ENCODE measurements at regions of chr11 and their contacts with region 1.

Region 1: GRCh38 chr11:62591448-62592145 is at the start of gene TUT1:
- DNase-seq: peak; percentile 99
- ATAC-seq: peak; percentile 88
- H3K4me3 Mint-ChIP-seq: peak within 1 kb of the TSS; percentile 91
- H3K27ac Mint-ChIP-seq: peak within 1 kb of the TSS; percentile 93
- H3K4me1 Mint-ChIP-seq: peaks cover 55% of the 10 kb centered on the region
- H3K27me3 Mint-ChIP-seq: no peaks in the 10 kb centered on the region
- total RNA-seq, gene TUT1: 22.2 to 25.0 TPM

Region 2: GRCh38 chr11:62394825-62395538 is 196.6 kb before region 1 on chr11:
- CTCF ChIA-PET with region 1: interaction called, 15 read pairs
- POLR2A ChIA-PET with region 1: no interaction called
- DNase-seq: peak; percentile 73
- ATAC-seq: peak; percentile 82
- H3K4me3 Mint-ChIP-seq: no peak overlapping the region
- H3K27ac Mint-ChIP-seq: no peak overlapping the region
- H3K4me1 Mint-ChIP-seq: peaks cover 33% of the 10 kb centered on the region
- H3K27me3 Mint-ChIP-seq: no peaks in the 10 kb centered on the region

Region 3: GRCh38 chr11:62487738-62488551 is 103.7 kb before region 1 on chr11:
- CTCF ChIA-PET with region 1: no interaction called
- POLR2A ChIA-PET with region 1: no interaction called
- DNase-seq: no peak
- ATAC-seq: no peak
- H3K4me3 Mint-ChIP-seq: no peak overlapping the region
- H3K27ac Mint-ChIP-seq: no peak overlapping the region
- H3K4me1 Mint-ChIP-seq: no peaks in the 10 kb centered on the region
- H3K27me3 Mint-ChIP-seq: no peaks in the 10 kb centered on the region

Region 4: GRCh38 chr11:62556108-62556871 is 35.3 kb before region 1 on chr11:
- CTCF ChIA-PET with region 1: interaction called, 16 read pairs
- POLR2A ChIA-PET with region 1: interaction called, 15 read pairs
- DNase-seq: peak; percentile 94
- ATAC-seq: peak; percentile 72
- H3K4me3 Mint-ChIP-seq: peak overlapping the region; percentile 66
- H3K27ac Mint-ChIP-seq: peak overlapping the region; percentile 95
- H3K4me1 Mint-ChIP-seq: peaks cover 95% of the 10 kb centered on the region
- H3K27me3 Mint-ChIP-seq: no peaks in the 10 kb centered on the region

Region 5: DNA sequence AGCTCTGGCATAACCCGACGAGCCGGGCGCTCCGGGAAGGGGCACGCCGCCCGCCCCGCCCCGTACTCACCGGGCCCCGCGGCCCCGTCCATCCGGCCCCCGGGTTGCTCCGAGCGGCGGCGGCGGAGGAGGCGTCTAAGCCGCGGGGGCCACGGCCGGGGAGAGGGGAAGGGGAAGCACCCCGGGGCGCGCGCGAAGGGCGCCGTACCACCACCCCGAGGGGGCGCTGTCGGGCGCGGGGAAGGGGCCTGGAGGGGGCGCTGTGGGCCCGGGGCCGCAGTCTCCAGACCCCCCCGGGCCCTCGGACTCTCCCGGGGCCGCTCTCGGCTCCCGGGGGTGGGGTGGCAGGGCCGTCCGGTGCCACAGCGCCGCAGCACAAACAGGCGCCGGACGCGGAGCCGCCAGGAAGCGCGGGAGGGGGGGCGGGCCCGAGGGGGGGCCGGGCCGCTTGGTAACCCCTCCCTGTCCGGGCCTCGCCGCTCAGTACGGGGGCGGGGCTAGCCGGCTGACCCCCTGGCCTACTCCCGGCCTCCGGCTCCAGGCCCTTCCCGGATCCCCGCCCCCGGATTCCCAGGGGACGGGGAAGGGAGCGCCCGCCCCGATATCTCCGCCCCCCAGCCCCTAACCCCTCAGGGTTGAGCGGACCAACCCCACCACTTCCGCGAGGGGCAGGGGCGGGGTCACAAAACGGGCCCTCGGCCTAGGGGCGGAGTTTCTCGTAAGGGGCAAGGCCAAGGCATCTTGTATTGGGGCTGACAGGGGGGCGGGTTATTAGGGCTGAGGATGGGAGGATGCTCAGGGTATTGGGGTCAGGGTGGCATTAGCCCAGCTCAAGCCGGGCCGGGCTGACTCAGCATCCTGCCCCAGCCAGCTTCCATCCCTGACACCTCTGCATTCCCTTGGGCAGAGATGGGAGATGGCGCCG is 21.0 kb after region 1 on chr11 and contains the starts of genes EML3 and ROM1:
- CTCF ChIA-PET with region 1: interaction called, 24 read pairs
- POLR2A ChIA-PET with region 1: interaction called, 26 read pairs
- DNase-seq: peak; percentile 92
- ATAC-seq: peak; percentile 78
- H3K4me3 Mint-ChIP-seq: peak within 1 kb of the TSS; percentile 88
- H3K27ac Mint-ChIP-seq: peak within 1 kb of the TSS; percentile 96
- H3K4me1 Mint-ChIP-seq: peaks cover 56% of the 10 kb centered on the region
- H3K27me3 Mint-ChIP-seq: no peaks in the 10 kb centered on the region
- total RNA-seq, gene EML3: 120 to 144 TPM
- total RNA-seq, gene ROM1: 1.3 to 2.0 TPM

Region 6: DNA sequence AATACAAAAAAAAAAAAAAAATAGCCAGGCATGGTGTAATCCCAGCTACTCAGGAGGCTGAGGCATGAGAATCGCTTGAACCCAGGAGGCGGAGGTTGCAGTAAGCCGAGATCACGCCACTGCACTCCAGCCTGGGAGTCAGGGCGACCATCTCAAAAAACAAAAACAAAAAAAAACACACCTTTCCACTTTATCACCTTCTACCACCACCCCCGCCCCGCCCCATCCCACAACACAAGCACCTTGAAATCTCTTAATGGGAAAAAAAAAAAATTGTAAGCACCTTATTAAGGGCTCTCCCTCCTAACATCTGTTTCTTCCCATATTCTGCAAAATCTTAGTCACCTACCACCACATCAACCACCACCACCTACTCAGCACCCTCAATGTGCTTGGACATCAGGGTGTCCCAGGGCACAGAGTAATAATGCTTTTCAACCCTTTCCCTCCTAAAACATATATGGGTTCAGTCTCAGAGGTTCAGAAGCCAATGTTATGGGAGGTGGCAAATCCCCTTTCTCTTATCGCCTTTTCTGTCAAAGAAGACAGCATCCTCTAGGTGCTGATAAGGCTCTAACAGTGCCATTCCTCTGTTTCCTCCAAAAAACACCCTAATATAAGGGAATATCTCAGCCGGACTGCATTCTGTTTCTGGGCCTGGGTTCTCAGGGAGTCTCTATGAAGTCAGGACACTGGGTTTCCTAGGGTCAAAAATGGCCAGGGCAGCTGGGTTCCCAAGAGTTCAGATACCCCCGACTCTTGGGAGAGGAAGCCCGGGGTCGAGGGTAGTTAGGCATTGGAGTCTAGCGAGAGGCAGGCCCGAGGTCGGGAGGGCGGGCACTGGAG is 60.8 kb after region 1 on chr11:
- CTCF ChIA-PET with region 1: interaction called, 6 read pairs
- POLR2A ChIA-PET with region 1: interaction called, 12 read pairs
- DNase-seq: no peak
- ATAC-seq: peak; percentile 7
- H3K4me3 Mint-ChIP-seq: peak overlapping the region; percentile 87
- H3K27ac Mint-ChIP-seq: peak overlapping the region; percentile 91
- H3K4me1 Mint-ChIP-seq: peaks cover 26% of the 10 kb centered on the region
- H3K27me3 Mint-ChIP-seq: no peaks in the 10 kb centered on the region

Region 7: DNA sequence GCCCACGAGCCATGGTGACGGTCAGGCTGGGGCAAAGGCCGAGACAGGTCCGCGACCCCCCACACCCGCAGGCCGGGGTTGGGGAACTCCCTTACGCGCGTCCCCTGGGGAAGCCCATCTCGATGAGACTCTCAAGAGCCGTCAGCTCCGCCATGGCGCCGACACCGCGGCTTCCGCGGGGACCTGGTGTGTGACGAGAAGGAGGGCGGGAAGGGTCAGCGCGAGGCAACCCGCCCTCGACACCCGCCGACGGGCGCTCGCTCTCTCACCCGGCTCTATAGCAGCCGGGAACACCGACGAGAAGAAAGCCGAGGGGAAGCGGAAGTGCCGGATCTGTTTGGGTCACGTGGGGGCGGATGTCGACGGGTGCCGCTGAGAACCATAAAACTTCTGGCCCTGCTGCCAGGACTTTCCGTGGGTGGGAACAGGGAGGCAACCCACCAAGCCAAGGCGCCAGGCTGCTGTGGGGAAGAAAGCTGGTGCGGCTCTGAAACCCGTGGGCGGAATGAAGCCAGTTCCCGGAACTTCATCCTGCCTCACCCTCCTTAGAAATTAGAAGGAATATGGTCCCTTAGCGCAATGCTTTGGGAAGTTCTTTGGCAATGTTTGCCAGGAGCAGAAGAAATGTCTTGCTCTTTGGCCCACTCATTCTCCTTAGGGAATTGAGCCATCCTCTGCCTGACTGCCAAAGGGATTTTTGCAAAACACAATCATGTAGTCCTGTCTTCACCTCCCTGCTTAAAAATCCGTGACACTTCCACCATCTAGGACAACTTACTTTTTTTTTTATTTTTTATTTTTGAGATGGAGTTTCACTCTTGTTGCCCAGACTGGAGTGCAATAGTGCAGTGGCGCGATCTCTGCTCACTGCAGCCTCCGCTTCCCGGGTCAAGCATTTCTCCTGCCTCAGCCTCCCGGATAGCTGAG is 87.4 kb after region 1 on chr11 and contains the start of gene UBXN1:
- CTCF ChIA-PET with region 1: interaction called, 12 read pairs
- POLR2A ChIA-PET with region 1: interaction called, 7 read pairs
- DNase-seq: peak; percentile 89
- ATAC-seq: peak; percentile 88
- H3K4me3 Mint-ChIP-seq: peak within 1 kb of the TSS; percentile 92
- H3K27ac Mint-ChIP-seq: peak within 1 kb of the TSS; percentile 87
- H3K4me1 Mint-ChIP-seq: peaks cover 42% of the 10 kb centered on the region
- H3K27me3 Mint-ChIP-seq: no peaks in the 10 kb centered on the region
- total RNA-seq, gene UBXN1: 107 to 118 TPM

Region 8: GRCh38 chr11:62726915-62727763 is 135.5 kb after region 1 on chr11 and contains the start of gene HNRNPUL2:
- CTCF ChIA-PET with region 1: interaction called, 3 read pairs
- POLR2A ChIA-PET with region 1: interaction called, 23 read pairs
- DNase-seq: peak; percentile 99
- ATAC-seq: peak; percentile 87
- H3K4me3 Mint-ChIP-seq: peak within 1 kb of the TSS; percentile 94
- H3K27ac Mint-ChIP-seq: peak within 1 kb of the TSS; percentile 96
- H3K4me1 Mint-ChIP-seq: peaks cover 47% of the 10 kb centered on the region
- H3K27me3 Mint-ChIP-seq: no peaks in the 10 kb centered on the region
- total RNA-seq, gene HNRNPUL2: 65.4 to 67.0 TPM

Measured in activated CD8-positive, alpha-beta T cell treated with anti-CD3 and anti-CD28 coated beads, Interleukin-2, amount 10 ng/mL, durations not matched to agents 7 days and 5 days (primary cell).